ENCODE measurements at regions of chr4 and their contacts with region 1.

Region 1: GRCh38 chr4:162523171-162523570 is 359.4 kb upstream of the FSTL5 start:
- DNase-seq: no peak
- ATAC-seq: no peak
- H3K4me3 ChIP-seq: no peak overlapping the region
- H3K27ac ChIP-seq: no peak overlapping the region
- H3K4me1 ChIP-seq: no peaks in the 10 kb centered on the region
- H3K27me3 ChIP-seq: no peaks in the 10 kb centered on the region
- CTCF ChIP-seq: no peak
- EP300 ChIP-seq: no peak
- POLR2A ChIP-seq: no peak
- RAD21 ChIP-seq: no peak

Region 2: DNA sequence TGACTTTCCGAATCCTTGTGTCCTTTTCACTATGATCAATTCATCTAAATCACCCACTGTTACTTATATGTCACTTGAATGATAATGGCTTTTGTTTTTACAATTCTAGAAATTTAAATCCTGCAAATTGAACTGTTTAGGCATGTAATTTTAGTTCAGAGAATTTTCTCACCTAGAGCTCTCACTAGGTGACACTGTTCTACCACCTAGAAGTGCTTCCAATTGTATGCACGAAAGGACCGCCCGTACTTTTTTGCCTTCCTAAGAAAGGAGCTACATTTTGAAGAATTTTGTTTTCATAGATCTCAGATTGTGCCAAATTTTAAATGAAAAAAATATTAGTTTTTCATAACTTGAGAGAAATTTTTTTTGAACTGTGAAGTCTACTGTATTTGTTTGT is 122.2 kb after region 1 on chr4:
- CTCF ChIA-PET with region 1: no interaction called
- POLR2A ChIA-PET with region 1: no interaction called
- RAD21 ChIA-PET with region 1: no interaction called
- SMC1A ChIA-PET with region 1: no interaction called
- in situ Hi-C with region 1: no loop called
- intact Hi-C with region 1: loop called (anchors 5 kb)
- DNase-seq: no peak
- ATAC-seq: no peak; the same call in 2 of the 3 replicates
- H3K4me3 ChIP-seq: no peak overlapping the region
- H3K27ac ChIP-seq: no peak overlapping the region
- H3K4me1 ChIP-seq: no peaks in the 10 kb centered on the region
- H3K27me3 ChIP-seq: no peaks in the 10 kb centered on the region
- CTCF ChIP-seq: peak in 1 of 3 experiments; percentile 44; a peak in 3 of 6 replicates
- EP300 ChIP-seq: no peak
- POLR2A ChIP-seq: no peak
- RAD21 ChIP-seq: peak; percentile 42

Measured in GM12878 (cell line).